ENCODE measurements at regions of chr15 and their contacts with region 1.

Region 1: DNA sequence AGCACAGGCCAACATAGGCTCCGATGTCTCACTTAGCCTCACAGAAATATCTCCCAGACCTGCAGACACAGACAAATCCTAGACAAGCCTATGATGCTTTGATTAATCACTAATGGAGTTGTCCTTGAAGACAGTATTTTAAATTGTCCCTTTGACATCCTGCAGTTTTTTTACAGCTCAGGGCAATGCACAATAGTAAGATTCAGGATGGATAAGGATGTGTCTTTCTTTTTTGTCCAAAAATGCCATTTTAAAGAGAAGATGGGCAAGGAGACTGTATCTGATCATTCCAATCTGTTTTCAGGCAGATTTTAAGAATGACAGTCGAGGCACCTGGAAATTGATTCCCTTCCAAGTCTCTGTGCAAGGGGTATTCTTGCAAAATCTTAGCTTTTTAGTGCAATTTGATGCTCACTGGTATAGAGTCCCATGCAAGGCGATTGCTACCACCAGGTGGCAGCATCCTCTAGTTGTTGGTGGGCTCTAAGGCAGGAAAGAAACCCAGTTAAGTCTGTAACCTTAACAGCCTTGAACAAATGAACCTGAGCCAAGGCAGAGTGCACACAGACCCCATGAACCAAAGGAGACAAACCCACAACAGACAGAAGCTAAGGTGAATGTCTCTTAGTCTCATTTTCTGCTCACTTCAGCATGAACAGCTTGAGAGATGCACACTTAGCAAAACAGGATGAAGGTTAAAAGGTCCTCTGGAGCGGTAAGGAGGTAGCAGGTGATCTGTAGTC is 51.2 kb upstream of the MINAR1 start:
- DNase-seq: peak; percentile 26 to 77 (median 62)
- ATAC-seq: peak; percentile 92
- H3K4me3 ChIP-seq: no peak overlapping the region
- H3K4me3 Mint-ChIP-seq: peak overlapping the region in 1 of 10 donors; percentile 36
- H3K27ac ChIP-seq: no peak overlapping the region
- H3K27ac Mint-ChIP-seq: peak overlapping the region in 2 of 9 donors; percentile 65 to 70
- H3K4me1 ChIP-seq: no peaks in the 10 kb centered on the region
- H3K4me1 Mint-ChIP-seq: peaks cover 0 to 5% (median 0%) of the 10 kb centered on the region in 7 donors
- H3K27me3 ChIP-seq: no peaks in the 10 kb centered on the region
- H3K27me3 Mint-ChIP-seq: no peaks in the 10 kb centered on the region

Region 2: GRCh38 chr15:79596051-79596507 is 215.2 kb after region 1 on chr15:
- CTCF ChIA-PET with region 1: no interaction called
- POLR2A ChIA-PET with region 1: no interaction called
- intact Hi-C with region 1: loop called (anchors 1 to 5 kb)
- DNase-seq: peak in 7 of 9 donors; percentile 2 to 48 (median 13)
- ATAC-seq: peak; percentile 91
- H3K4me3 ChIP-seq: no peak overlapping the region
- H3K4me3 Mint-ChIP-seq: no peak overlapping the region
- H3K27ac ChIP-seq: no peak overlapping the region
- H3K27ac Mint-ChIP-seq: no peak overlapping the region
- H3K4me1 ChIP-seq: no peaks in the 10 kb centered on the region
- H3K4me1 Mint-ChIP-seq: peaks cover 0 to 5% (median 0%) of the 10 kb centered on the region in 7 donors
- H3K27me3 ChIP-seq: no peaks in the 10 kb centered on the region
- H3K27me3 Mint-ChIP-seq: peaks cover 13 to 41% (median 26%) of the 10 kb centered on the region in 5 donors

Region 3: DNA sequence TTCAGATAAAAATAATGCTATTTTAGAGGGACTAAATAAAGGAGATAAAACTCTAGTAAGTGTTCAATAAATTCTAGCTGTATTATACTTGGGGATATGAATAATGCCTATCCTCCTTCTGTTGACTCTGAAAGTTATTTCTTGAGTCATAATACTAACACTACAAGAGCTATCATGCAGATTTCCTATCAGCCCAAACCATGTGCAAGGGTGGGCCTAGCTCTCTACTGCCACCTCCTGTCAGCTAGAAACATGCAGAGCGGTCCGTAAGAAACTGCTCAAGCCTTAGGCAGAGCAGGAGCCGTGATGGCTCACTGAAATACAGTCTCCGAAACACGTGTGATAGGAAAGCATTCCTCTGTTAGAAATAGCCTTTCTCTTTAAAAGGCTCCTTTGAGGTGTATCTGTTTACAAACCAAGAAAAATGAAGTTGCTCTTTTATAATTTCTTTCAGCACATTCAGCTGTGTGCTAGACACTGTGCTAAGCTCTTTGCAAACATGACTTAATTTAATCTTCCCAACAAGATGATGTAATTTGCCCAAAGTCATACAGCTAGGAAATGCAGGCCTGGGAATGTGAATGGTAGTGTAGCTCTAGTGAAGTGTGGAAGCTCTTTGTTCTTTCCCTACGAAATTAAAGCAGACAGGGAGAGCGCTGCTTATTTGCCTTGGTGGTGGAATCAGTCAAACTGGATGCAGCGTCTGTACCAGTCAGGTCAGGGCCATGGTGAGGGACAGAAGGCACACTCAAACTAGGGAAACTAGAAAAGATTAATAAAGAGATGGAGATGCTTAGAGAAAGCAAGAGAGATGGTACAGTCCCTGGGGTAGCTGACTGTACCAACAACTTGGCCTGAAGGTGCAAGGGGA is 472.8 kb after region 1 on chr15:
- CTCF ChIA-PET with region 1: interaction called, 40 read pairs
- POLR2A ChIA-PET with region 1: no interaction called
- intact Hi-C with region 1: loop called (anchors 1 kb)
- DNase-seq: peak in 8 of 9 donors; percentile 15 to 61 (median 49)
- ATAC-seq: peak; percentile 97
- H3K4me3 ChIP-seq: no peak overlapping the region
- H3K4me3 Mint-ChIP-seq: no peak overlapping the region
- H3K27ac ChIP-seq: no peak overlapping the region
- H3K27ac Mint-ChIP-seq: peak overlapping the region in 4 of 9 donors; percentile 0 to 47 (median 30)
- H3K4me1 ChIP-seq: no peaks in the 10 kb centered on the region
- H3K4me1 Mint-ChIP-seq: peaks cover 6 to 43% (median 32%) of the 10 kb centered on the region in 7 donors
- H3K27me3 ChIP-seq: no peaks in the 10 kb centered on the region
- H3K27me3 Mint-ChIP-seq: no peaks in the 10 kb centered on the region